GM13976 (cell line): ENCODE measurements at regions of chr13 and their contacts with region 1.

Region 1: GRCh38 chr13:42333613-42334328 is 61.8 kb downstream of the AKAP11 start:
- DNase-seq: peak; percentile 49
- CTCF ChIP-seq: peak; percentile 76

Region 2: DNA sequence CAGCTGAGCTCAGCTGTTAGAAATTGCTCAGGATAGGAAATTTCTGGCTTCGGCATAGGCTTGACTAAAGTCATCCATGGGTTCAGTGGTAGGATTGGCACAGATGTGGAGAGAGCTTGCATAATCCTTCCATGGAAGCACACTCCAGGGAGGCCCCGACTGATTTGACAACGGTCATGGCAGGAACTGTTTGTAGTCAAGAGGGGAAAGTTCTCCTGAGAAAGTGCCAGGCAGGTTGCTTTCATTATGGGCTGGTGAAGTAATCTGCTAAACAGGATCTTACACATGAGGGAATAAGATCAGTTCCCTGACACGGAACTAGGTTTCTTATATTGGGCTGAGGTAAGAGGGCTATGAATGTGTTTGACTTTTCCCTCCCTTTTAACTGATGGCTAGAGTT is 756.3 kb before region 1 on chr13:
- in situ Hi-C with region 1: no loop called
- DNase-seq: peak; percentile 4
- CTCF ChIP-seq: no peak

Region 3: GRCh38 chr13:42412812-42413483 is 79.2 kb after region 1 on chr13:
- in situ Hi-C with region 1: no loop called
- DNase-seq: no peak
- CTCF ChIP-seq: no peak

Region 4: DNA sequence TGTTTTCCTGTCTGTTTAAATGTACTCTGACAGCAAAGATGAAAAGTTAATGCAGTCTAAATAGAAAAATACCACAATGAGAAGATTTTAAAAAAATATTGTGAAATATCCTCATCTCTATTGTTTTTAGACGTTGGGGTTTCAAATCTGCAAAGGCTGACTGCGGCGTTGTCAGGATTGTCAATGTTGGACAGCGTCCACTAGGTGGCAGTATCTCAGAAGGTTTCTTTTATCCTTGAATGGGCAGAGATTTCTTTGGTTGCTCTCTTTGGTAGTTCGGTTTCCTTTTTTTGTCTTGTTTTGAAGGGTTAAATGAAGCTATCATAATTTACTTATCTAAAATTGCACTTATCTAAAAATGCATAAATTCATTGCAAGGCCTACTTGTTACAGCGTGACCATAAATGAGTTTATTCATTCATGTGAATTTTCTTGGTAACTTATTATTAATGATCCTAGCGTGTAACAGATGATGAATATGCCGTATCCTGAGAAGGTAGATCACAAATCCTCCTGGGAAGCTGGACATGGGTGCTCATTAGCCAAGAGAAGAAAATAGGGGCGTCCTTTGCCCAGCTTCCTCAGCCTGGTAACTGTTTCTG is 261.3 kb after region 1 on chr13:
- in situ Hi-C with region 1: loop called (anchors 10 kb)
- DNase-seq: peak; percentile 71
- CTCF ChIP-seq: peak; percentile 66

Region 5: GRCh38 chr13:42875475-42876269 is 541.9 kb after region 1 on chr13:
- in situ Hi-C with region 1: no loop called
- DNase-seq: no peak
- CTCF ChIP-seq: no peak